Mammary epithelial cell (primary cell): ENCODE measurements at regions of chr22 and their contacts with region 1.

Region 1: DNA sequence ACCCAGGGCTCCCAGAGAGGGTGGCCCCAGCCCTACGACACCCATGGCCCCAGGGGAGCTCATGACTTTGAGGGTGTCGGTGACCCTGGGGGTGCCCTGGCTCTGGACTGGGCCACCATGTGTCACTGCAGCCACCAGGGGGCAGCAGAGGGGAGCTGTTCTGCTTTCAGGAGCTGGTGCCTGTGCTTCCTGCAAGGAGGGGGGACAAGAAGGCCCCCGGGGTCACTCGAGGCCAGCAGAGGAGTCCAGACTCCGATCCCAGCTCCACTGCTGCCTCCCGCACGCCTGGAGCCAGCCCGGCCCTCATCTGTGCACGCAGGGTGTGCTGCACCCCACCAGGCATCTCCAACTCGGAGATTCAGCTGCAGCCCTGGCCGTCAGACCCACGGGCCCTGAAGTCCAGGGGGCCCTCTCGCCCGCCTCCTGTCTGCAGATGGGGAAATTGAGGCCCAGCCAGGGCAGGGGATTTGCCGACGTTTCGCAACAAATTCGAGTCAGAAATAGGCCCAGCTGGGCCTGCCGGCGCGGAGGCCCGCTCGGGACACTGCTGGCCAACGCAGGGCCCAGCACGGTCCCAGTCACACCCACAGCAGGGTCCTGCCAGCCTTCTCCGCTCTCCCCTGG is 29.5 kb upstream of the WNT7B start:
- DNase-seq: peak; percentile 78
- H3K4me3 ChIP-seq: peak overlapping the region; percentile 13 to 40 (median 19)
- H3K27ac ChIP-seq: peak overlapping the region; percentile 85
- H3K4me1 ChIP-seq: peaks cover 46% of the 10 kb centered on the region
- H3K27me3 ChIP-seq: no peaks in the 10 kb centered on the region
- CTCF ChIP-seq: peak; percentile 77 to 89

Region 2: DNA sequence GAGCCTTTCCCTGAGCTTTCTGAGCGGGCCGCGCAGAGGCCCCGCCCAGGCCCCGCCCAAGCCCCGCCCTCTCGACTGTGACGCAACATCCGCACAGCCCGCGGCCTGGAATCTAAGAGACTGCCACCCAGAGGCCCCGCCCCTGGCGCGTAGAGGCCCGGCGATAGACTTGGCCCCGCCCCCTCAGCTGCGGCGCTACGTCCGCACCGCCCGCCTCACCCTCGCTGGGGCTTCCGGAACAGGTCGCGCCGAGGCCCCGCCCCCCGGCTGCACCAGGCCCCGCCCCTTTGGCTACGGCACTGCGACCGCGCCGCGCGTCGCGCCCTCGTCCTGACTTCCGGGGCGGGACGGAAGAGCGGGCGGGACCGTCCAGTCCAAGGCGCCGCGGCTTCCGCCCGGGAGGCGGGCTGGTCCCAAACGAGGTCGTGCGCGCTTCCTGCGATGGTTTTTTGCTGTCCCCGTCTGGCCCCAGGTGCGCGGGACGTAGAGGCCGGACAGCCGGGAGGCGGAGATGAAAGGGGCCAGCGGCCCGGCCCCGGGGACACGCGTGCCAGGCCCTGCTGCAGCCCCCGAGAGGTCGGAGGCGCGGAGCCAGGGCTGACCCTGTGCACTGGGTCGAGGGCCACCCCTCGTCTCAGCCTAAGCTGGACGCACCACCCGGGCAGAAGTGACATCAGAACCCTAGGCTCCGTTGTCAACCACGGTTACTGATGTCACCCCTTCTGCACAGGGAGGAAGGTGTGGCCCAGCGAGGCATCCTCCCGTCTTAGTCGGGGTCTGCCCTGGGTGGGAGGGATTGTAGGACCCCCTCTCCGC is 29.5 kb after region 1 on chr22:
- CTCF ChIA-PET with region 1: interaction called, 23 read pairs
- dilution Hi-C with region 1: no loop called
- in situ Hi-C with region 1: no loop called
- intact Hi-C with region 1: loop called (anchors 1 kb)
- DNase-seq: peak; percentile 97
- H3K4me3 ChIP-seq: peak overlapping the region; percentile 74 to 89 (median 87)
- H3K27ac ChIP-seq: peak overlapping the region; percentile 80
- H3K4me1 ChIP-seq: peaks cover 19% of the 10 kb centered on the region
- H3K27me3 ChIP-seq: no peaks in the 10 kb centered on the region
- CTCF ChIP-seq: no peak

Region 3: GRCh38 chr22:46108564-46109473 is 102.3 kb after region 1 on chr22:
- CTCF ChIA-PET with region 1: interaction called, 4 read pairs
- dilution Hi-C with region 1: no loop called
- in situ Hi-C with region 1: loop called in 1 of 2 experiments (anchors 5 kb)
- intact Hi-C with region 1: no loop called
- DNase-seq: peak; percentile 58
- H3K4me3 ChIP-seq: no peak overlapping the region
- H3K27ac ChIP-seq: no peak overlapping the region
- H3K4me1 ChIP-seq: peaks cover 87% of the 10 kb centered on the region
- H3K27me3 ChIP-seq: no peaks in the 10 kb centered on the region
- CTCF ChIP-seq: peak in 1 of 2 donors; percentile 8

Region 4: GRCh38 chr22:46262449-46263232 is 256.1 kb after region 1 on chr22:
- CTCF ChIA-PET with region 1: no interaction called
- dilution Hi-C with region 1: no loop called
- in situ Hi-C with region 1: no loop called
- intact Hi-C with region 1: no loop called
- DNase-seq: no peak
- H3K4me3 ChIP-seq: no peak overlapping the region
- H3K27ac ChIP-seq: no peak overlapping the region
- H3K4me1 ChIP-seq: peaks cover 3% of the 10 kb centered on the region
- H3K27me3 ChIP-seq: peaks cover 5% of the 10 kb centered on the region
- CTCF ChIP-seq: no peak

Region 5: DNA sequence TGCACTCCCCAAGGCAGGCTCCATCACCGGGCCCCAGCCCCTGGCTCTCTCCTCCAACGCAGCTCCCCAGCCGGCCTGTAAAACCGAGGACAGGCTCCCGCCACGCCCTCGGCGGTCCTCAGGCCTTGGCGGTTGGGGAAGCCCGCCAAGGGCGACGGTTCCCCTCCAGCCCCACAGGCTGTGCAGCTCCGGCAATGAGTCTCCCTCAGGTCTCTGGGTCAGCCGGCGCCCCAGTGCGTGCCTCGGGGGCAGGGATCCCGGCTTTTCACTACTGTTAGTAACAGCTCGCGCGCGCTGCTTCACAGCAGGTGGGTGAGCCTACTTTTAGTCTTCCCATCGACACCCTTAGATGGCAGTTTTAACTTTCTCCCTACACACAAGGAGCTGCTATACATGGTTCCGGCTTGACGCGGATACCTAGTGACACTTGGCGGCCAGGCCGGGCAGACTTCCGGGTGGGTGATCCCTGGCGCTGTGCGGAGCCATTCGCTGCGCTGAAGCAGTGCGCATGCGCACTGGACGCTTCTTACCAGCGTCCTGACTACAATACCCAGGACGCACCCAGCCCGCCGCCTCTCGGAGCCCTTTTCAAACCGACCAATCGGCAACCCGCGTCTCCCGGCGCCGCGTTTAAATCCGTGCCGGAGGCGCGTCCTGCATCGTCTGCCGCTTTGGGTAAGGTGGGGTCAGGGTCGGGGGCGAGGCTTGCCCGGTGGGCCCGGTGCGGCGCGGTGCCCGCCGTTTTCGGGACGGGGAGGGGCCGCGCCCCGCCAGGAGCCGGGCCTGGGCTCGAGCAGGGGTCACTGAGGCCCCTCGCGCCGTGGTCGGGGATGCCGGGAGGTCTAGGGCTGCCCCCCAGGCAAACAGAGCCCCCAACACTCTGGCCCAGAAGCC is 290.0 kb after region 1 on chr22 and contains the start of gene GTSE1:
- CTCF ChIA-PET with region 1: no interaction called
- dilution Hi-C with region 1: no loop called
- in situ Hi-C with region 1: no loop called
- intact Hi-C with region 1: loop called (anchors 5 kb)
- DNase-seq: peak; percentile 95
- H3K4me3 ChIP-seq: peak within 1 kb of the TSS; percentile 56 to 72 (median 72)
- H3K27ac ChIP-seq: peak within 1 kb of the TSS; percentile 53
- H3K4me1 ChIP-seq: peaks cover 15% of the 10 kb centered on the region
- H3K27me3 ChIP-seq: no peaks in the 10 kb centered on the region
- CTCF ChIP-seq: peak in 1 of 2 donors; percentile 28
- total RNA-seq, gene GTSE1: 0.67 to 22.3 TPM

Region 6: GRCh38 chr22:46335201-46336118 is 329.0 kb after region 1 on chr22 and contains the start of gene TRMU:
- CTCF ChIA-PET with region 1: no interaction called
- dilution Hi-C with region 1: loop called (anchors 10 kb)
- in situ Hi-C with region 1: no loop called
- intact Hi-C with region 1: no loop called
- DNase-seq: peak; percentile 81
- H3K4me3 ChIP-seq: peak within 1 kb of the TSS; percentile 68 to 96 (median 87)
- H3K27ac ChIP-seq: peak within 1 kb of the TSS; percentile 40
- H3K4me1 ChIP-seq: peaks cover 10% of the 10 kb centered on the region
- H3K27me3 ChIP-seq: no peaks in the 10 kb centered on the region
- CTCF ChIP-seq: no peak
- total RNA-seq, gene TRMU: 16.3 to 42.0 TPM